Naive thymus-derived CD4-positive, alpha-beta T cell (primary cell): ENCODE measurements at regions of chr3 and their contacts with region 1.

Region 1: DNA sequence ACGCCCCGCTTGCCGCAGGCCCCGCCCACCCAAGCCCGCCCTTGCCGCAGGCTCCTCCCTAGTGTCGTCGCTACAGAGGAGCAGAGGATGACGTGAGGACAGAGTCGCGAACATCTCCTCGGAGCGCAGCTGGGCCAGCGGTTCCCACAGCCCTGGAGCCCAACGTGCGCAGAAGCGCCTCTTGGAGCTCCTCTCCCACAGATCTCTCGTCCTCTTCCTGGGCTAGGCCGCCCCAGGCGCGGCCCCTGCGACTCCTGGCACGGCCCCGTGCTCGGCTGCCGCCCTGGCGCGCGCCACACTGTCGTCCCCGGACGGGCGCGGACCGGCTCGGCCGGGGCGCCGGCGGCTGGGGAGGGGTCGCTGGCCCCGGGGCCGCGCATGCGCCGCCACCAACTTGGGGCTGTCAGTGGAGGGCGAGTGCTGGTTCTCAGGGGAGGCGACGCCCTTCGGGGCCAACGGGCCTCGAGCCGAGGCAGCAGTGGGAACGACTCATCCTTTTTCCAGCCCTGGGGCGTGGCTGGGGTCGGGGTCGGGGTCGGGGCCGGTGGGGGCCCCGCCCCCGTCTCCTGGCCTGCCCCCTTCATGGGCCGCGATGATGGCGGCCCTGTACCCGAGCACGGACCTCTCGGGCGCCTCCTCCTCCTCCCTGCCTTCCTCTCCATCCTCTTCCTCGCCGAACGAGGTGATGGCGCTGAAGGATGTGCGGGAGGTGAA is at the start of gene TRPC1:
- DNase-seq: peak in 8 of 9 donors; percentile 58 to 83 (median 78)
- ATAC-seq: peak; percentile 97
- H3K4me3 ChIP-seq: peak within 1 kb of the TSS; percentile 76
- H3K4me3 Mint-ChIP-seq: peak within 1 kb of the TSS; percentile 80 to 92 (median 88)
- H3K27ac ChIP-seq: peak within 1 kb of the TSS; percentile 76
- H3K27ac Mint-ChIP-seq: peak within 1 kb of the TSS; percentile 31 to 94 (median 88)
- H3K4me1 ChIP-seq: peaks cover 0 to 4% of the 10 kb centered on the region in 2 donors
- H3K4me1 Mint-ChIP-seq: peaks cover 5 to 20% (median 11%) of the 10 kb centered on the region in 7 donors
- H3K27me3 ChIP-seq: peaks cover 0 to 2% of the 10 kb centered on the region in 2 donors
- H3K27me3 Mint-ChIP-seq: peaks cover 20 to 67% (median 22%) of the 10 kb centered on the region in 5 donors
- total RNA-seq, gene TRPC1: 1.5 to 7.6 (median 5.3) TPM

Region 2: GRCh38 chr3:141412087-141412935 is 1311.8 kb before region 1 on chr3:
- CTCF ChIA-PET with region 1: no interaction called
- POLR2A ChIA-PET with region 1: no interaction called
- intact Hi-C with region 1: loop called in 1 of 2 experiments (anchors 10 kb)
- DNase-seq: peak in 7 of 9 donors; percentile 54 to 76 (median 69)
- ATAC-seq: peak; percentile 78
- H3K4me3 ChIP-seq: peak overlapping the region; percentile 26
- H3K4me3 Mint-ChIP-seq: peak overlapping the region; percentile 62 to 91 (median 86)
- H3K27ac ChIP-seq: peak overlapping the region; percentile 83
- H3K27ac Mint-ChIP-seq: peak overlapping the region; percentile 96 to 100 (median 99)
- H3K4me1 ChIP-seq: peaks cover 59 to 74% of the 10 kb centered on the region in 2 donors
- H3K4me1 Mint-ChIP-seq: peaks cover 52 to 87% (median 74%) of the 10 kb centered on the region in 7 donors
- H3K27me3 ChIP-seq: no peaks in the 10 kb centered on the region
- H3K27me3 Mint-ChIP-seq: no peaks in the 10 kb centered on the region

Region 3: DNA sequence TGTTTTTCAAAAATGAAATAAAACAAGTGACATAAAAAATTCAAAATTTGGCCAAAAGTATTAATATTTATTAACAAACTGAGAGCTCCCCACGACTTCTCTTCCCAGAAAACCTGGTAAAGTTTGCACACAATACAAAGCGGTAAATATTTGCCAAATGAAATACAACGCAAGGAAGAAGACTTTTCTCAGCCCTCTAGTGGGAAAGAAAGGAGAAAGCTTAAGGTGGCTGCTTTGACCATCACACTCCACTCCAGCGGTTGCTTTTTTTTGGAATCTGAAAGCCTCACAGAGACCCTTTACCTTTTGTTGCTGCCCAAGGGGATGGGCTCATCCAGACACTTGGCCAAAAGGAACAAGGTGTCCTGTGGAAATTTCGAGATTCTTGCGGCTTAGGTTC is 497.6 kb before region 1 on chr3:
- CTCF ChIA-PET with region 1: no interaction called
- POLR2A ChIA-PET with region 1: no interaction called
- intact Hi-C with region 1: loop called in 1 of 2 experiments (anchors 5 kb)
- DNase-seq: no peak
- ATAC-seq: no peak
- H3K4me3 ChIP-seq: no peak overlapping the region
- H3K4me3 Mint-ChIP-seq: peak overlapping the region; percentile 62 to 94 (median 82)
- H3K27ac ChIP-seq: no peak overlapping the region
- H3K27ac Mint-ChIP-seq: peak overlapping the region in 3 of 9 donors; percentile 18 to 45 (median 33)
- H3K4me1 ChIP-seq: no peaks in the 10 kb centered on the region
- H3K4me1 Mint-ChIP-seq: peaks cover 0 to 21% (median 16%) of the 10 kb centered on the region in 7 donors
- H3K27me3 ChIP-seq: no peaks in the 10 kb centered on the region
- H3K27me3 Mint-ChIP-seq: no peaks in the 10 kb centered on the region

Region 4: DNA sequence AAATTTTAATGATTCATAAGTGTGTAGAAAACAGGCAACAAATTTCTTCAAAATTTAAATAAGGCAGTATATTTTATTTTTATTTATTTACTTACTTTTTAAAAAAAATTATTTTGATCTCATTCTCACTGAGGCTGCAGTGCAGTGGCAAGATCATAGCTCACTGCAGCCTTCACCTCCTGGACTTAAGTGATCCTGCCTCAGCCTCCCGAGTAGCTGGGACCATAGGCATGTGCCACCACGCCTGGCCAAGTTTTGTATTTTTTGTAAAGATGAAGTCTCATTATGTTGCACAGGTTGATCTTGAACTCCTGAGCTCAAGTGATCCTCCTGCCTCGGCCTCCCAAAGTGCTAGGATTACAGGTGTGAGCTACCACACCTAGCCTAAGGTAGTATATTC is 215.0 kb before region 1 on chr3:
- CTCF ChIA-PET with region 1: no interaction called
- POLR2A ChIA-PET with region 1: no interaction called
- intact Hi-C with region 1: loop called in 1 of 2 experiments (anchors 2 kb)
- DNase-seq: peak in 3 of 9 donors; percentile 3 to 8 (median 5)
- ATAC-seq: peak; percentile 37
- H3K4me3 ChIP-seq: peak overlapping the region; percentile 48
- H3K4me3 Mint-ChIP-seq: peak overlapping the region; percentile 71 to 88 (median 84)
- H3K27ac ChIP-seq: peak overlapping the region; percentile 51
- H3K27ac Mint-ChIP-seq: peak overlapping the region; percentile 74 to 96 (median 89)
- H3K4me1 ChIP-seq: peaks cover 0 to 10% of the 10 kb centered on the region in 2 donors
- H3K4me1 Mint-ChIP-seq: peaks cover 3 to 23% (median 14%) of the 10 kb centered on the region in 7 donors
- H3K27me3 ChIP-seq: no peaks in the 10 kb centered on the region
- H3K27me3 Mint-ChIP-seq: no peaks in the 10 kb centered on the region

Region 5: DNA sequence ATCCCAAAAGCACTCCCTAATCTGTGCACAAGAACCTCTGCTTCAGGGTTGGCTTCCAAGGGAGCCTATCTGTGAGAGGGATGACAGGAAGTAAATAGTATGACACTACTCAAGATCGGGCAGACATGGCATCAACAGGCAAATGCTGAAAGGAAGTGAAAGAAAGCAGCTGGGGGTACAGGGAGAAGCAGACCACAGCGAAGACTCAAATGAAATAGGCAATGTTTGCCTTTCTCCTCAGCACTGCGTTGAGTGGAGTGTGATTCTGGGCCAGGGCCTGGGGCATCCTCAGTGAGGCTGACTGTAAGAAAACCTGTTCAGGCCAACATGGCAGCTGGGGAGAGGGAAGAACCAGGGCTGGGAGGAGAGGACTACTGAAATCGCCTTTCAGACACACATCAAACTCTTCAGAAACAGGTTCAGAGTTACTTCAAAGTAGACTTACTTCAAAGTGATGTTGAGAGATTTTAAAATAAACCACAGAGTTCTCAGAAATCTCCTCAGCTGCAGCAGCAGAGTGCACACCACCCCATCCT is 1027.6 kb after region 1 on chr3:
- CTCF ChIA-PET with region 1: no interaction called
- POLR2A ChIA-PET with region 1: no interaction called
- intact Hi-C with region 1: loop called in 1 of 2 experiments (anchors 10 kb)
- DNase-seq: peak; percentile 12 to 83 (median 75)
- ATAC-seq: peak; percentile 80
- H3K4me3 ChIP-seq: peak overlapping the region; percentile 42
- H3K4me3 Mint-ChIP-seq: peak overlapping the region; percentile 67 to 89 (median 78)
- H3K27ac ChIP-seq: peak overlapping the region; percentile 63
- H3K27ac Mint-ChIP-seq: peak overlapping the region; percentile 88 to 100 (median 94)
- H3K4me1 ChIP-seq: peaks cover 16 to 35% of the 10 kb centered on the region in 2 donors
- H3K4me1 Mint-ChIP-seq: peaks cover 20 to 71% (median 68%) of the 10 kb centered on the region in 7 donors
- H3K27me3 ChIP-seq: no peaks in the 10 kb centered on the region
- H3K27me3 Mint-ChIP-seq: no peaks in the 10 kb centered on the region